Ovary (tissue), 10 donors: ENCODE measurements at regions of chr18 and their contacts with region 1.

Region 1: DNA sequence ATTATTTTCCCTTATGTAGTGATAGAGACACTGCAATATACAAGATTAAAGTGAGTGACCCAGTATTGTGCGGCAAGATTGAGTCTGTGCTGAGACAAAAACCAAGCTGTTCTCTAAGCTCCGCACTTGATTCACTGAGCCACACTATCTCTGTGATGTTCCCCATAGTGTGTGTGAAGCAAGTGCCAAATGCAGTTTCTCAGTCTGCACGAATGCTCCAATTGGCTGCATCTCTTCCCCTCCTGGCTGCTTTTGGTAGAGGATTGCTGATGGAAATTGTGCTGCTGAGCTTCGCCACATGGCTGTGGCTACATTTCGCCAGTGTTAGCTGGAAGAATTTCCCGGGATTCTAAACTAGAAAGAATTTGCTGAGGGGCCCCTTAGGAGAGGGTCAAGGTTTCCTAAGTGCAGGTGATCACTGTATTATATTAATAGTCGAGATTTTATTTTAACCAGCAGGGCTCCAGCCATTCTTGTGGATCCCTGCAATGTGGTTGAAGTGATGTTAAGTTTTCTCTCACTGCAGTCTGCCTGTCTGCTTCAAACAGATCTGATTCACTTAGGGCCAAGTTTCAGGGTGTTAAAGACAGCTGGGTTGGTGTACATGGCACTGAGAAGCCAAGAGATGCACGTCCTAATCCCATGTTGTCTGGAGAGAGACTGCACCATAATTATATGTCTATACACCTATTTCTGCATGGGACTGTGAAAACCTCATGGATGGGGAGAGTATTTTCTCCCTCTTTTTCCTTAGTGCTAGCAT is 317.2 kb downstream of the DCC start:
- DNase-seq: no peak
- H3K4me3 ChIP-seq: no peak overlapping the region
- H3K27ac ChIP-seq: no peak overlapping the region
- H3K4me1 ChIP-seq: no peaks in the 10 kb centered on the region
- H3K27me3 ChIP-seq: no peaks in the 10 kb centered on the region
- CTCF ChIP-seq: no peak
- EP300 ChIP-seq: no peak
- POLR2A ChIP-seq: no peak

Region 2: DNA sequence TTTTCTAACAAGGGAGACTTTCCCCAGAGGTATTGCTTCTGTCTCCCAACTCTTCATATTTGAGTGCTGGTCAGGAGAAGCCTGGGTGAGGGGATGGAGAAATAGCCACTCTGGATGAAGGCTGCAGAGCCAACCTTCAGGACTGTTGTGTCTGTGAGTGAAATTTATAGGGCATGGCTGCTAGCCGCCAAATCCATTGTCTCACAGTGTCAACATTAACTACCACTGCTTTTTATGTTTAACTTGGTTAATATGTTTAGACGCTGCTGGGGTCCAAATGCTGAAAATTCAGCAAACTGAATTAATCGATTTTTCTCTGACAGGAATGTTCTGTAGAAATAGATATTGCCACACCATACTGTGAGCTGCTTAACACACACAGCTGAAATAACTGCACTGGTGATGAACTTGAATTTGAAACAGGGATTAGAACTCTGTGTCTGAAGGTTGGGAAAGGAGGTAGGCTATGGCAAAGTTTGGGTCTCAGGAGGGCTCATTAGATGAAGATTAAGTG is 36.2 kb before region 1 on chr18:
- intact Hi-C with region 1: no loop called
- DNase-seq: no peak
- H3K4me3 ChIP-seq: no peak overlapping the region
- H3K27ac ChIP-seq: no peak overlapping the region
- H3K4me1 ChIP-seq: no peaks in the 10 kb centered on the region
- H3K27me3 ChIP-seq: no peaks in the 10 kb centered on the region
- CTCF ChIP-seq: no peak
- EP300 ChIP-seq: no peak
- POLR2A ChIP-seq: no peak

Region 3: DNA sequence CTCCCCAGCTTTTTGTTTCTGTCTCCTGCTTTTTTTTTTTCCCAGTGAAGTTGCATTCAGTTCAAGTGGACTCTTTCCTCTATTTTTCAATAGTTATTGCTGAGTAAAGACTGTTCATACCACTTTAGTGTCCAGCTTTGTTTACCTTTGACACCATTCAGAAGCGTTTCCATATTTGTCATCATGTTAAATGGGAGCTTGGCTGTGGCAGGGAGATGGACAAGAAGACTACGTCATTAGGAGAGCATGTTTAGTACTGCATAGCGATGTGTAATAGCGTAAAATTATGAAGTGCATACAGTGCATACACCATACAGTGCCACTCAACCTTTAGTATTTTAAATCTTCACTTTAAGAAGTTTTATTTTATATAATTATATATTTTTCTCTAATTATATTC is 338.7 kb after region 1 on chr18:
- intact Hi-C with region 1: loop called in 1 of 4 experiments (anchors 5 kb)
- DNase-seq: no peak
- H3K4me3 ChIP-seq: no peak overlapping the region
- H3K27ac ChIP-seq: no peak overlapping the region
- H3K4me1 ChIP-seq: no peaks in the 10 kb centered on the region
- H3K27me3 ChIP-seq: no peaks in the 10 kb centered on the region
- CTCF ChIP-seq: no peak
- EP300 ChIP-seq: no peak
- POLR2A ChIP-seq: no peak